Esophagus squamous epithelium (tissue), 5 donors: ENCODE measurements at regions of chr20 and their contacts with region 1.

Region 1: DNA sequence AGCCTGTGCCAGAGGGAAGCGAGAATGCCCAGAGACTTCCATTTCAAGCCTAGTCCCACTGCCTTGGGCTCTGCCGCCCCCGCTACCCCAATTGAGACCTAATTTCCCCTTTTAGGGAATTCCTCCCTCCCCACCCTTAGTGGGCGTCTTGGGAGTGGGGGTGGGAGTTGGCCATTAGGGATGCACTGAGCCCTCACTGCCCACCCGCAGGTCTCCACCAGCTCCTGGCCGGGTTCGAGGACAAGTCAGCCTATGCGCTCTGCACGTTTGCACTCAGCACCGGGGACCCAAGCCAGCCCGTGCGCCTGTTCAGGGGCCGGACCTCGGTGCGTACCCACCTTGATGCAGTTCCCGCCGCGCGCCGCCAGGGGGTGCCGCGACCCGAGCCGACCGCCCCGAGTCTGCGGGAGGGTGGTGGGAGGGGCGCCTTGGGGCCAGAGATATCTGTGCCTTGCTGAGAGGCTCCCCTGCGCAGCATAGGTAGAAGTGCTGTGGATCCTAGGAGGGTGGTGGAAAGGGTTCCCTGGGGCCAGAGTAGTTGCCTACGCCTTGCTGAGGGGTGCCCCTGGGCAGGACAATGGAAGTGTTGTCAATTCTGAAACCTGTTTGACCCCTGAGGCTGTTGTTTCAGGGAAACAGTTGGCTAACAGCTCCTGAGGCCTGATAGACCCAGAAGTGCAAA is 9.2 kb downstream of the ITPA start:
- DNase-seq: no peak
- H3K4me3 ChIP-seq: peak overlapping the region in 1 of 4 donors; percentile 14
- H3K27ac ChIP-seq: peak overlapping the region in 3 of 4 donors; percentile 6 to 52 (median 18)
- H3K4me1 ChIP-seq: peaks cover 6 to 38% (median 8%) of the 10 kb centered on the region in 3 donors
- H3K27me3 ChIP-seq: no peaks in the 10 kb centered on the region
- CTCF ChIP-seq: peak; percentile 67 to 98 (median 92)
- POLR2A ChIP-seq: no peak

Region 2: GRCh38 chr20:3092611-3093379 is 125.7 kb before region 1 on chr20:
- intact Hi-C with region 1: no loop called
- DNase-seq: no peak
- H3K4me3 ChIP-seq: peak overlapping the region; percentile 6 to 56 (median 26)
- H3K27ac ChIP-seq: no peak overlapping the region
- H3K4me1 ChIP-seq: peaks cover 2 to 12% (median 5%) of the 10 kb centered on the region in 3 donors
- H3K27me3 ChIP-seq: peaks cover 0 to 62% (median 4%) of the 10 kb centered on the region in 4 donors
- CTCF ChIP-seq: no peak
- POLR2A ChIP-seq: no peak

Region 3: GRCh38 chr20:3312940-3313682 is 94.7 kb after region 1 on chr20:
- intact Hi-C with region 1: loop called (anchors 10 kb)
- DNase-seq: no peak
- H3K4me3 ChIP-seq: no peak overlapping the region
- H3K27ac ChIP-seq: peak overlapping the region; percentile 73 to 78 (median 75)
- H3K4me1 ChIP-seq: peaks cover 26 to 75% (median 58%) of the 10 kb centered on the region in 3 donors
- H3K27me3 ChIP-seq: no peaks in the 10 kb centered on the region
- CTCF ChIP-seq: no peak
- POLR2A ChIP-seq: no peak